Lower leg skin (tissue), 4 donors: ENCODE measurements at regions of chr17 and their contacts with region 1.

Region 1: DNA sequence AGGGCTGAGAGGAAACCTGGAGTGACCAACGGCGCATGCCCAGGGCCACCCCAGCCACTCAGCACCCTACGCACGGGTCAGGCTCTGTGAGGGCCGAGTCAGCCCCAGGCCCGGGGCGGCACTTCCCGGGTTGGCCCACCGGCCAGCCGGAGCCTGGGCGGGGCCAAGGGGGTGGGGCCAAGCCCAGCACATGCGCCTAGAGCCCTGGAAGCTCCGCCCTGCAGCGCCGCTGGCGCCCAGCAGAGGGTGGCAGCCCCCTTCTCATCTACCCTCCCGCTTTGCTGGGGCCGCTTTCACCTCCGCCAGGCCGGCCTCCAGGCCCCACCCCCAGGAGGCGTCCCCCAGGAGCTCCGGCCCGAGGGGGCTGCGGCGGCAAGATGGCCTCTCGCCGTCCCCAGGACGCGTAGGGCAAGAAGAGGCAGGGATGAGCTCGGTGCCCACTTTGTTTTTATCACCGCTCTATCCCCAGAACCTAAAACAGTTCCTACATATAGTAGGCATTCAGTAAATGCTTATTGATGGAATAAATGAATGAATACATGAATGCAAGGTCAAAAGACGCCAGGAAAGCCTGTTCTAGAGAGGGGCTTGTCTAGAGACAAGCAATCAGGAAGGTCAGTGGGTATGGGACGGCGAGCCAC is 31.3 kb downstream of the MYO18A start:
- DNase-seq: peak; percentile 91 to 98
- H3K4me3 ChIP-seq: no peak overlapping the region
- CTCF ChIP-seq: peak in 1 of 3 donors; percentile 75
- POLR2A ChIP-seq: no peak

Region 2: GRCh38 chr17:28743225-28744103 is 405.4 kb before region 1 on chr17 and contains the start of gene TRAF4:
- intact Hi-C with region 1: no loop called
- DNase-seq: peak; percentile 69 to 94
- H3K4me3 ChIP-seq: peak within 1 kb of the TSS; percentile 37
- CTCF ChIP-seq: no peak
- POLR2A ChIP-seq: peak in 1 of 2 donors; percentile 58
- total RNA-seq, gene TRAF4: 11.0 to 30.9 (median 21.8) TPM

Region 3: DNA sequence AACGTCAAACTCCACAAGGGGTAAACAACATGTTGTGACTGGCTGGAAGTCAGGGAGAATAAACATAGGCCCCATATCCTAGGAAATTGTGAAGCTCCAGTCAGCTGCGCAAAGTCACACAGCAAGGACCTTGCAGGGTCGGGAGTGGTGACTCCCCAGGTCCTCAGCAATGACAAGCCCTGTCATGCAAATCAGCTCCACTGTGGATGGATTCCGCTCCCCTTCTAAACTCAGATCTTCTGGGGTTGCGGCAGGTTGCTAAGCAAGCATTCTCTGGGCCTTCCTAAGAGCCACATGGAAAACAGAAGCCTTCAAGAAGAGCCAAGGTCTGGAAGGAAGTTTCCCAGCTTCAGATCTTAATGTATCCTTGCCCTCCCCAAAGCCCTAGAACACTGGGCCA is 60.2 kb after region 1 on chr17:
- intact Hi-C with region 1: no loop called
- DNase-seq: peak in 1 of 2 donors; percentile 60
- H3K4me3 ChIP-seq: no peak overlapping the region
- CTCF ChIP-seq: no peak
- POLR2A ChIP-seq: no peak

Region 4: DNA sequence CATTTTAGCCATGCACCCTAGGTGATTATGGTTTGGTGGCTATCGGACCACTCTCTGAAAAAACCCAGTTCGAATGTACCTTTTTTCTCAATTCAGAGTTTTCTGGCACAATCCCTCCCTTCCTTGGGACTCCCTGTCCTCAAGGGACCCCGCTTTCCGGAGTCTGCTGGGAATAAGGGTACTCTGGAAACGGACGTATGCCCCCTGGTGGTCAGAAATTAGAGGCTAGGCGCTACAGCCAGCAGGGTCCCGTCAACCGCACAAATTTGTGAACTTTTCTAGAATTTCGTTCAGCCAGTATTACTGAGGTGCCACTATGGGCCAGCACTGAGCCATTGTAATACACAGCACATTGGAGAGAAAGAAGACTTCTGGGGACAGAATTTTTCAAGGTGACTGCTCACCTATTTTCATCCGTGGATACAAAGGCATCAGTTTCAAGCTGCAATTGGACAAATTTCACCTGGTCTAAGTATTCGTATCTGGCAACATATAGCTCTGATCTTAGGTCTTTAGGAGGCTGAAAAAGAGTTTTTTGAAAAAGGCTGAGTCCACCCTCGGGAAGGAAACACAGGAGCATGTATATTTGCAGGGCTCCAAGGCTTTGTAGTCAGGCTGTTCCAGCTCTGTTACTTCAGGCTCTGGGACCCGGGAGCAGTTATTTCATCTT is 70.6 kb after region 1 on chr17:
- intact Hi-C with region 1: loop called (anchors 2 kb)
- DNase-seq: peak; percentile 75 to 96
- H3K4me3 ChIP-seq: no peak overlapping the region
- CTCF ChIP-seq: peak in 1 of 3 donors; percentile 79
- POLR2A ChIP-seq: no peak

Region 5: DNA sequence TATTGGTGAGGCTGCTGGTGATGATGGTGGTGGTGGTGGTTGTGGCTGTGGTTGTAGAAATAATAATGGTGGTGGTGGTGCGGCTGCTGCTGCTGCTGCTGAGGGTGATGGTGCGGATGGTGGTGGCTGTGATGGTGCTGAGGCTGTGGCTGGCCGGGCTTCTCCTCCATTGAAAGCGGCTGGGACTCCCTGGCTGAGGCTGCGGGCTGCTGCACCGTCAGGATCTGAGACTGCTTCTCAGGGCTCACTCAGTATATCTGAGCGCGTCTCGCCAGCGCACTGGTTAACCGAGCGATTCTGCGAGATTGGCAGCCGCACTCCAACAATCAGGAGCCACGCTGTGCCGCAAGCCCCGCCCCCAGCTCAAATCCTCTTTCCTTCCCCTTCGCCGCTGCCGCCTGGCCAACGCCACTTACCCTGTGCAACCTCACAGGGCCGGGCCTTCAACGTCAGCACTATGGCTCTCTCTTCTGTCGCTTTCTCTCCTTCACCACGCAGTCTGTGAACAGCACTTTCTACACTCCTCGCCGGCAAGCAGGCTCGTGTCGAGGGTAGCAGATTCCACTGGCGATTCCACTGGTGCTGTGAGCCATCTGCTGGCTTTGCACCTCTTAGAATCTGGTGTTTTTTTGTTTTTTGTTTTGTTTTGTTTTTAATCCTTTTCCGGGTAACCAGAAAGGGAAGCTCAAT is 145.1 kb after region 1 on chr17 and contains the start of gene NUFIP2:
- intact Hi-C with region 1: loop called (anchors 2 kb)
- DNase-seq: peak; percentile 100
- H3K4me3 ChIP-seq: peak within 1 kb of the TSS; percentile 98
- CTCF ChIP-seq: no peak
- POLR2A ChIP-seq: peak in 1 of 2 donors; percentile 97
- total RNA-seq, gene NUFIP2: 22.7 to 28.4 (median 23.4) TPM